GM10248 (cell line): ENCODE measurements at regions of chr5 and their contacts with region 1.

Region 1: GRCh38 chr5:139312075-139312474 is 18.5 kb downstream of the MATR3 start:
- DNase-seq: no peak
- CTCF ChIP-seq: no peak

Region 2: DNA sequence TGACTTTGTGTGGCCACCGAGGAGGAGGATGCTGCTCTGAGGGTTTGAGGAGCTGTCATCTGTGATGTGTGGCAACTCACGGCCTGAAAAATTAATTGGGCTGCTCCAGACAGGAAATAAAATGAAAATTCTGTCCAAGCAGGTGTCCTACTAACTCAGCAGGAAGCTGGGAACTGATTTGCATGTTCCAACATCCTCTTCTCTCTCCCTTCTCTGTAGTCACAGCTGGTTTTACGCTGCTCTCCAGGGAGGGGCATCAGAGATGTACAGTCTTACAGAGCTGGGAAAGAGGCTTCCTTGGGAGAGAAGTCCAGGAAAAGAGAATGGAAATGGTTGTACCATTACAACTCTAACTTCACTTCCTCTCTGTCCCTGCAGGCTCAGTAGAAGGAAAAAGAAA is 89.7 kb before region 1 on chr5:
- CTCF ChIA-PET with region 1: no interaction called
- POLR2A ChIA-PET with region 1: interaction called, 13 read pairs
- DNase-seq: no peak
- CTCF ChIP-seq: no peak

Region 3: DNA sequence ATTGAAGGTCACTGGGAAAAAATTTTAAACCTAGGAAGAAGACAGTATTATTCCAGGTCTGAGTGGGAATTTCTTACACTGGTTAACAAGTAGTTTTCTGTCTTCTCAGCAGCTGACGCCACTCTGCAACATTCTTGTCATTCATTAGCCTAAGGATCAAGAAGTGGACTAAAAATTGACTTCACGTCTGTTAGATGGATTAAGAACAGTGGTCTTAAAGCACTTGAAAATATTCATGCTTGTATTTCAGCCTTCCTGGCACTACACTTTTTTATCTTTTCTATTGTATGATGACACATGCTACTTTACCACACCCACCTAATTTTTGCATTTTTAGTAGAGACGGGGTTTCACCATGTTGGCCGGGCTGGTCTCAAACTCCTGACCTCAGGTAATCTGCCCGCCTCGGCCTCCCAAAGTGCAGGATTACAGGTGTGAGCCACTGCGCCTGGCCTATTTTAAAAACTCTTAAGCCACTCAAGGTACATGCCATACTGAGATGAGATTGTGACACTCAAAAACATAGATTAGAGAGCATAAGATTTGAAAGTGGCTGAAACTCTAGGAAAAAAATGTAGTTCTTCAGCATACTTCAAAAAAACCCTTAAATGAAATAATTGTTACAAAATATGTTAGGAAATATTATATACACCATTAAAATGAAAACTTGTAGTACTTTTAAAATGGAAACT is 10.1 kb before region 1 on chr5:
- CTCF ChIA-PET with region 1: interaction called, 13 read pairs
- POLR2A ChIA-PET with region 1: no interaction called
- DNase-seq: no peak
- CTCF ChIP-seq: no peak